ENCODE measurements at regions of chr4 and their contacts with region 1.

Region 1: DNA sequence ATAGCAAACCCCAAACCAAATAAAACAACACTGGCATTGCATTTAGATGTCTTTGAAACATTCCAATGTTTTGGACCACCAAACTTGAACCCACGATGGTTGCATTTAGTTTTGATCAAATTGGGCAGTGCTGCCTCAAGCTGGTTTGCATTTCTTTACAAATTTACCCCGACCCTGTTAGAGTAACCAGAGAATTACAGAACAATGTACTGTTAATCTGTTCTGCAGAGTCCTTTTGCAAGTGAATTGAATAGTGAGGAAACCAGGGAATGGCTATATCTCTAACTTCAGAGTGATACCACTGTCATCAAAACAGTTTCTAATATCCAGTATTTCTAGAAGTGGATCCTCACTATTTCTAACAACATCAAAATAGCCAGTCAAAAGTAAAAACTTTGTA is 49.5 kb upstream of the GYPA start:
- DNase-seq: no peak
- ATAC-seq: no peak
- H3K4me3 ChIP-seq: no peak overlapping the region
- H3K27ac ChIP-seq: no peak overlapping the region
- H3K4me1 ChIP-seq: no peaks in the 10 kb centered on the region
- H3K27me3 ChIP-seq: no peaks in the 10 kb centered on the region
- CTCF ChIP-seq: no peak
- POLR2A ChIP-seq: no peak
- RAD21 ChIP-seq: no peak

Region 2: DNA sequence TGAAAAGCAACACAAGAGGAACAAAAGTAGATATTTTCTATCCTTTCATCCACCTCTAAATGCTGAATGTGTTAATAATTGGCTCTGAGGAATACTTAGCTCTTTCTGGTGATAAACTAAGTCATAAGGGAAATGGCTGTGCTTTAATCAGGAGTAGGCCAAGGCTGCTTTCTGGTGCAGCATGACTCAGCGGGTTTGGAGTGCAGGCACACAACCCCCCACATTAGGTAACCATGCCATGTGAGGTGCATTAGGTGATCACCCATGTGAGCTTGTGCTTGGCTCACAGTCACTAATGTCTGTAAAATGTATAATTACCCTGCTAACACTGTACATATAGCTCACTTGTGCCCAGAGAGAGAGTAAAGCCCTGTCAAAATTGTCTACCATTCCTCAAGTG is 948.1 kb before region 1 on chr4:
- CTCF ChIA-PET with region 1: no interaction called
- POLR2A ChIA-PET with region 1: no interaction called
- RAD21 ChIA-PET with region 1: no interaction called
- intact Hi-C with region 1: no loop called
- DNase-seq: no peak
- ATAC-seq: no peak
- H3K4me3 ChIP-seq: no peak overlapping the region
- H3K27ac ChIP-seq: no peak overlapping the region
- H3K4me1 ChIP-seq: no peaks in the 10 kb centered on the region
- H3K27me3 ChIP-seq: no peaks in the 10 kb centered on the region
- CTCF ChIP-seq: no peak
- POLR2A ChIP-seq: no peak
- RAD21 ChIP-seq: no peak

Region 3: DNA sequence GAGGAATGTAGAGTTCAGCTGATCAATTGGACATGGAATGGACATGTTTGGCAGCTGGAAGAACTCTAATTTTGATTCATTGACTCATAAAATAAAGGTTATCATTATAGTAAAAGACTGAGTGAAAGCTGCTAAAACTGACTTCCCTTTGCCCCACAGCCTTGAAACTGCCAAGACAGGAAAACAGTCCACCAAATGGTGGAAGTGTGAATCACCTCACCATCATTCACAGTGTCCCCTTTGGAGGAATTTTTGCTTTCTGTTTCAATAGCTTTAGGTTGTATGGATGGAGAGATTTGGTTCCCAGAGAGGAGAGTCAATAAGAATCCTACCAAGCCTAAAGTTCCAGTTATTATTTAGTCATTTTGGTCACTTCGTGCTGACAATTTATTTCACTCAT is 468.7 kb before region 1 on chr4:
- CTCF ChIA-PET with region 1: no interaction called
- POLR2A ChIA-PET with region 1: no interaction called
- RAD21 ChIA-PET with region 1: no interaction called
- intact Hi-C with region 1: no loop called
- DNase-seq: no peak
- ATAC-seq: no peak
- H3K4me3 ChIP-seq: no peak overlapping the region
- H3K27ac ChIP-seq: no peak overlapping the region
- H3K4me1 ChIP-seq: no peaks in the 10 kb centered on the region
- H3K27me3 ChIP-seq: no peaks in the 10 kb centered on the region
- CTCF ChIP-seq: no peak
- POLR2A ChIP-seq: no peak
- RAD21 ChIP-seq: no peak

Region 4: DNA sequence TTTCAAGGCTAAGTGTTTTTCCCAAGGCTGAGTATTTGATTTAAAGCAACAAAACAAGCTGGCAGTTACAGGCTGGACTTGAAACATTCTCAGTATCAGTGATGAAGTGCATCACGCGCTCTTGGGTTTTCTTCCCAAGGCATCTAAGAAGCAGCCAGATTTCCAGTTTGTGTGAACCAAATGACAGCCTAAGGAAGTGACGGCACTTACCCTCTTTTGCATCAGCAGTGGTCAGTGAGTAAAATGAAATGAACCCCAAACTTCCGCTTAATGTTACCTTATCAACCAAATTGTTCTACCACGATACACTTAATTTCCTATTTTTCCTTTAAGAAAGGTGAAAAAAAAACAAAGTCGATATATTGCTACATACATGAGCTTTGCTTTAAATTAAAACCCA is 268.8 kb before region 1 on chr4:
- CTCF ChIA-PET with region 1: no interaction called
- POLR2A ChIA-PET with region 1: no interaction called
- RAD21 ChIA-PET with region 1: no interaction called
- intact Hi-C with region 1: no loop called
- DNase-seq: no peak
- ATAC-seq: no peak
- H3K4me3 ChIP-seq: no peak overlapping the region
- H3K27ac ChIP-seq: no peak overlapping the region
- H3K4me1 ChIP-seq: no peaks in the 10 kb centered on the region
- H3K27me3 ChIP-seq: no peaks in the 10 kb centered on the region
- CTCF ChIP-seq: no peak
- POLR2A ChIP-seq: no peak
- RAD21 ChIP-seq: no peak

Region 5: GRCh38 chr4:144202081-144202480 is 12.1 kb after region 1 on chr4:
- CTCF ChIA-PET with region 1: no interaction called
- POLR2A ChIA-PET with region 1: no interaction called
- RAD21 ChIA-PET with region 1: no interaction called
- intact Hi-C with region 1: no loop called
- DNase-seq: no peak
- ATAC-seq: no peak
- H3K4me3 ChIP-seq: no peak overlapping the region
- H3K27ac ChIP-seq: no peak overlapping the region
- H3K4me1 ChIP-seq: no peaks in the 10 kb centered on the region
- H3K27me3 ChIP-seq: no peaks in the 10 kb centered on the region
- CTCF ChIP-seq: no peak
- POLR2A ChIP-seq: no peak
- RAD21 ChIP-seq: no peak

Region 6: GRCh38 chr4:144562019-144562705 is 372.2 kb after region 1 on chr4:
- CTCF ChIA-PET with region 1: no interaction called
- POLR2A ChIA-PET with region 1: no interaction called
- RAD21 ChIA-PET with region 1: no interaction called
- intact Hi-C with region 1: loop called (anchors 10 kb)
- DNase-seq: no peak
- ATAC-seq: peak; percentile 55
- H3K4me3 ChIP-seq: no peak overlapping the region
- H3K27ac ChIP-seq: no peak overlapping the region
- H3K4me1 ChIP-seq: no peaks in the 10 kb centered on the region
- H3K27me3 ChIP-seq: no peaks in the 10 kb centered on the region
- CTCF ChIP-seq: no peak
- POLR2A ChIP-seq: no peak
- RAD21 ChIP-seq: no peak